HEK293 (cell line): ENCODE measurements at regions of chr12 and their contacts with region 1.

Region 1: GRCh38 chr12:43766291-43766690 is 7.5 kb downstream of the IRAK4 start:
- H3K4me3 ChIP-seq: no peak overlapping the region
- H3K27ac ChIP-seq: no peak overlapping the region
- H3K4me1 ChIP-seq: no peaks in the 10 kb centered on the region
- CTCF ChIP-seq: no peak

Region 2: DNA sequence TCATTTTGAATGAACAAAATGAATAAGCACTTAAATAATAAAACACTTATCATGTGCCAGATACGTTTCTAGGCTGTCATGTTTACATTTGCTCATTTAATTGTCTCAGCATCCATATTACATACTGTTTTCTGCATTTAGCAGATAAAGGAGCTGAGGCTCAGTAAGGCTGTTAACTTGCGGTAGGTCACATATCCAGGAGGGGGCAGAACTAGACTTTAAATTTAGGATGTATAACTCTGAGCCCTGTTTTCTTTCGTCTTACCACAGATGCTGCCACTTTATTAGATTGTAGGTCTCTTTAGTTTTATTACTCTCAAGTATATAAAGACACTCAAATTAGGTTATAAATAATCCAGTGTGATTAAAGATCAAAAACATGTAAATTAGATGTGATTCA is 10.2 kb after region 1 on chr12:
- CTCF ChIA-PET with region 1: interaction called, 10 read pairs
- POLR2A ChIA-PET with region 1: no interaction called
- H3K4me3 ChIP-seq: no peak overlapping the region
- H3K27ac ChIP-seq: no peak overlapping the region
- H3K4me1 ChIP-seq: no peaks in the 10 kb centered on the region
- CTCF ChIP-seq: peak; percentile 40; the same call in 1 of the 2 replicates